GM18951 (cell line): ENCODE measurements at regions of chr1 and their contacts with region 1.

Region 1: GRCh38 chr1:108125312-108126138 is 74.6 kb downstream of the SLC25A24 start:
- POLR2A ChIP-seq: no peak

Region 2: DNA sequence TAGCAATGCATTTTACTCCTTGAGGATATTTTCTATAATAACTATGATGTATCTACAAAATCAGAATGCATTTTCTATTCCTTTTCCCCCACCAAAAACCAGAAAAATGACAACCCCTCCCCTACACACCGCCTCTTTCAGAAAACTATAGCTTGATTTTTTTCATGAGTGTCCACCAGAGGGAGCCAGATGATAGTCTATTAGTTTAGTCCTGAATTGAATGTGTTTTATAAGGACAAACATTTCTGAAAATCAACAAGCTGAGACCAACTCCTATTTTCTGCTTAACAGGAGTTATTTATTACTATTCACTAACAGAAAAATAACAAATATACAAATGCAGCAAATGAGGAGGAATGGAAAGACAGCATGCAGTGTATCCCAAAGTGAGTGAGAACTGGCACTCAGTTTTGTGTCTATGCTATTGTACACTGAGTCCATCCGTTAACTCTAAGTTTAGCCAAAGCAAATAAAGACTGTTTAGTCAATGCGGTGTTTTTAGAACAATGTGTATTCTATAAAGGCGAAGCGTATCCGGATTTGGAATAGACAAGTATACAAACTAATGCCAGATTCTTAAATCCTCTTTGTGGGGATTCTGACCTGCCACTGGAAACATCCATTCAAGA is 343.2 kb before region 1 on chr1:
- in situ Hi-C with region 1: loop called (anchors 10 kb)
- POLR2A ChIP-seq: no peak

Region 3: DNA sequence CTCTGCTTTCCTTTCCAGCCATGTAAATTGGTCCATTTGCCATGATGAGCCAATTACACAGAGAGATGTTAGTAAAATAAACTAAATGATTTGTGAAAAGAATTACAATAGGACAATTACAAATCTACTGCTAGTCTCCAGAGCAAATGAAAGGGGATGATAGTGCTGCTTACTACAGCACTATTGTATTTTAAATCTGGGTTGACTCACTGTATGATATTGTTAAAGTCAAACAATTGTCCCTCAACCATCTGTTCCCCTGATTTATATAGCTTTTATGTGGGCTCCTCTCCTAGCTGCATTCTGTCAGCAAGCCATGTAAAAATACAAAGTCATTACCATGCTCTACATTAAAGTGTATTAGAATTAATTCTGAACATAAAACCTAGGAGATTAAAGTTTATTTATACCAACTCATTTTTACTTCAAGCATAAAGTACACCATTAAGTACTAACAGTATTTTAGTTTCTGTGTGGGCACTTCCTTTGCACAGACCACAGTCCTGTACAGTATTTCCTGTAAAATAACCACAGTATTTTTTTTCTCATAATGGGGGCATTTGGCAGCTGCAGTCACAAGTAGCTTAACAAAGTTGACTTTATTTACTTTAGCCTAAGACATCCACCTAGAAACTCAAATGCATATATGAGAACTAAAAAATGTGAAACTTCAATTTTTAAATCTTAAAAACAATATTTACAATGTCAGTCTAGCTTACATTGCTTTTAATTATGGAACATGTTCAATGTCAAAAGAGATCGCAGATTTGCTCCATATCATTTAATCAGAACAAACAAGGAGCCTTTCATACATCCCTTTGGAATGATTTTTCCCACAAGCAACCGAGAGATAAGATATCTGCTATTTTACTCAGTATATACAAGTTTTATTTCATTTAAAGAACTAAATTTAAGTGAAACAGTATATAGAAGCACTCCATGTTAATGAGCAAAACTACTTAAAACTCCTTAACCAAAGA is 296.2 kb before region 1 on chr1:
- in situ Hi-C with region 1: no loop called
- POLR2A ChIP-seq: no peak

Region 4: DNA sequence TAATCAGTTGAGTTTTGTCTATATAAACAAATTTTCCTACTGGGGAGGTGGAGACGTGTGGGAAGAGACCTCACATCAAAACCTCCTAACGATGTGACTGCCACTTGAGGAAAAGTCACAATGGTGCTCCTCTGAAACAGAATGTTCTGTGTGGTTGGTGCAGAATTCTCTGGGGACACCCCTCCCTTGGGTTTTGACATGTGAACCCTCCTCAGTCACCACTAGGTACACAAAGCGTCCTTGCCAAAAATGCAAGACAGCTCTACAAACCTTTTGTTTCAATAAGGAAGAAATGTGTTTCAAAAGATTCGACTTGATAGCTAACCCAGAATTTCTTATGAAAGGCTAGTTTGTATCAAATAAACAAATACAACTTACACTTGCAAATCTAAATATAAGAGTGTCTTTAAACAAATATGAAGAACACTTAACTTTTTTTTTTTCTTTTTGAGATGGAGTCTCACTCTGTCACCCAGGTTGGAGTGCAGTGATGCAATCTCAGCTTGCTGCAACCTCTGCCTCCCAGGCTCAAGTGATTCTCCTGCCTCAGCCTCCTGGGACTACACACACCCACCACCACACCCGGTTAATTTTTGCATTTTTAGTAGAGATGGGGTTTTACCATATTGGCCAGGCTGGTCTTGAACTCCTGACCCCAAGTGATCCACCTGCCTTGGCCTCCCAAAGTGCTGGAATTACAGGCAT is 65.3 kb after region 1 on chr1:
- in situ Hi-C with region 1: no loop called
- POLR2A ChIP-seq: no peak